ENCODE measurements at regions of chr1 and their contacts with region 1.

Region 1: DNA sequence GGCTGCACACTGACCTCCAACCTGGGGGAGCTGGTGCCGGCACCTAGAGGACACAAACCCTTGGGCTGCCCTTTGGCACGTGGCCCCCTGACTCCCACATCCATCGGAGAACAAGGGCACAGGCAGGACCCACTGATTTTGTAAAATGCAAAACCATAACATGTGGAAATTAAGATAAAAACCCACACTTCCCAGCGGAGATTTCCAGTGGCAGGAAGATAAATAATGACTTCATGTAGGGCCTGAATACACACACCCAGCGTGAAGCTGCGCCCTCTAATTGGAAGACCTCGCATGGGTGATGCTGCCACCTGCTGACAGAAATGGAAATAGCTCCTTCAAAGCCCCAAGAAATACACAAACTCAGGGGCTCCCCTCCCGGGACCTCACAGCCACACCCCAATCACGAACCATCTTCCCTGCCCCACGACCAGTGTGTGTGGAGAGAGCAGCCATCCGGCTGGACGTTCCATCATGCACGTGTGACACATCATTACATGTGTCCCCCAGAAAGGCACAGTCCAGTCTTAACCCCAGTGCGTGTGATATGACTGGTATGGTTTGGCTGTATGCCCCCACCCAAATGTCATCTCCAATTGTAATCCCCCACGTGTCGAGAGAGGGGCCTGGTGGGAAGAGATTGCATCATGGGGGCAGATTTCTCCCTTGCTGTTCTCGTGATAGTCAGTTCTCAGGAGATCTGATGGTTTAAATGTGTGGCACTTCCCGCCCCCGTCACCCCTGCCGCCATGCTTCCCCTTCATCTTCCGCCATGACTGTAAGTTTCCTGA is 5.7 kb upstream of the TPRG1L start:
- DNase-seq: peak; percentile 61 to 88 (median 77)
- H3K4me3 ChIP-seq: no peak overlapping the region
- H3K27ac ChIP-seq: no peak overlapping the region
- H3K4me1 ChIP-seq: peaks cover 10 to 18% of the 10 kb centered on the region in 2 donors
- H3K27me3 ChIP-seq: peaks cover 3% of the 10 kb centered on the region
- CTCF ChIP-seq: peak; percentile 59 to 87 (median 74)
- POLR2A ChIP-seq: no peak

Region 2: DNA sequence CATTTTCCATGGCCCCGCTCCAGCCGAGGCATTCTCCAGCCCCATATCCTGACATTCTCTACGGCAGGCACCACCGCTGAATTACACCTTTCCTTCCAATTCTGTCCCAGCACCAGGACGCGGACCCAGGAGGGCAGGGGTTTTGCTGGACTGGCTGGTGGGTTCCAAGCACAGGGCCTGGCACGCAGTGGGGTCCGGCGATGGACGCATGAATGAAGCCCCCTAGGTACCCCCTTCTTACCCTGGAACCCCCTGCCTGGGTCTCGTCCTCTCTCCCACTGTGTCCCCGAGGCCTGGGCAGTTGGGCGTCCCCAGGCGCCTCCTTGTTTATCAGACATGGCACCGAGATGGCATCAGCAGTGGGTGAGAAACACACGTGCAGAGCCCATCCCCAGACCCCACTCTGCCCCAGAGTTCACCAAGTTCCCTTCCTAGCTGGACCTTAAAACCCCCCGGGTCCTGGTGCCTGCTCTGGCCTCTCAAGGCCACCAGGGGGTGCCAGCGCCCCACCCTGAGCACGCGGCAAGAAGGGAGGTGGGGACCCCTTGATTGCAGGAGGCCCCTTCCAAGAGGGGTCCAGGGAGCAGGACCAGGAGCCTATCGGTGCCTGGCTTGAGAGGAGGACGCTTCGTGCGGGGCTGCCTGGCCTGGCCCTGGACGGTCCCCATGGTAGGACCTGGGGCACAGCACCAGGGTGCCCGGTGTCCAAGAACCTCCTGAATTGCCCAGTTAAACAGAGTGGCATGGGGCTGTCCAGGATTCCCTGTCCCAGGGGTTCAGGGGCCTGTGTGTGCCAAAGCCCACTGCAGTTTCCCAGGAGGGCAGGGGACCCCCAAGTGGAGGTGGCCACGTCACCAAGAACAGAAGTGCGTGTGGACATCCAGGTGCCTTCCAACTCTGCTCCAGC is 53.9 kb before region 1 on chr1:
- intact Hi-C with region 1: loop called (anchors 2 to 5 kb)
- DNase-seq: peak in 2 of 7 donors; percentile 23 to 28
- H3K4me3 ChIP-seq: no peak overlapping the region
- H3K27ac ChIP-seq: no peak overlapping the region
- H3K4me1 ChIP-seq: no peaks in the 10 kb centered on the region
- H3K27me3 ChIP-seq: no peaks in the 10 kb centered on the region
- CTCF ChIP-seq: peak; percentile 41 to 79 (median 62)
- POLR2A ChIP-seq: no peak

Measured in adrenal gland (tissue), 19 donors.